MCF 10A (cell line): ENCODE measurements at regions of chr16 and their contacts with region 1.

Region 1: GRCh38 chr16:82999711-83000110 is 372.9 kb downstream of the CDH13 start:
- DNase-seq: no peak
- H3K4me3 Mint-ChIP-seq: no peak overlapping the region
- H3K27ac Mint-ChIP-seq: no peak overlapping the region
- H3K4me1 Mint-ChIP-seq: no peaks in the 10 kb centered on the region
- H3K27me3 Mint-ChIP-seq: no peaks in the 10 kb centered on the region
- CTCF ChIP-seq: no peak

Region 2: GRCh38 chr16:82945420-82946101 is 54.1 kb before region 1 on chr16:
- CTCF ChIA-PET with region 1: no interaction called
- POLR2A ChIA-PET with region 1: no interaction called
- intact Hi-C with region 1: loop called (anchors 2 kb)
- DNase-seq: no peak
- H3K4me3 Mint-ChIP-seq: no peak overlapping the region
- H3K27ac Mint-ChIP-seq: no peak overlapping the region
- H3K4me1 Mint-ChIP-seq: no peaks in the 10 kb centered on the region
- H3K27me3 Mint-ChIP-seq: no peaks in the 10 kb centered on the region
- CTCF ChIP-seq: no peak

Region 3: DNA sequence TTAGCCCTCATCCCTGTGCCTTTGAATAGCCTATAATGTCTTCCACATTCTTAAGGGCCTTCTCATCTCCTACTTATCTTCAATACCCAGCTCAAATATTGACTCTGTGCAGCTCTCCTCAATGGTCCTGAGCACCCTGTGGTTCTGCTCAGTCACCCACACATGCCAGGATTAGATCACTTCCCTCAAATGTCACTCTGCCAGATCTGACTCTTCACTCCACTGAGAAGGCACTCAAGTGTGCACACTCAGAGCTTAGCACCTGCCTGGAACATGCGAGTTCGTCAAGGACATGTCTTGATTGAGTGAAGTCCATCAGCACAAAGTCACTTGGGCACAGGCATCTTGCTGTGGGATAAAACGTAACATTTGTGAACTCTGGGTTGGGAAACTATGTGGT is 31.8 kb after region 1 on chr16:
- CTCF ChIA-PET with region 1: no interaction called
- POLR2A ChIA-PET with region 1: no interaction called
- intact Hi-C with region 1: no loop called
- DNase-seq: no peak
- H3K4me3 Mint-ChIP-seq: no peak overlapping the region
- H3K27ac Mint-ChIP-seq: no peak overlapping the region
- H3K4me1 Mint-ChIP-seq: no peaks in the 10 kb centered on the region
- H3K27me3 Mint-ChIP-seq: no peaks in the 10 kb centered on the region
- CTCF ChIP-seq: no peak